Activated B cell treated with CpG ODN at 0.5 μM for 24 hours (primary cell): ENCODE measurements at regions of chr3 and their contacts with region 1.

Region 1: GRCh38 chr3:157088601-157089454 is 71.1 kb downstream of the CCNL1 start:
- DNase-seq: peak; percentile 92
- ATAC-seq: peak; percentile 92
- H3K4me3 Mint-ChIP-seq: peak overlapping the region; percentile 90
- H3K27ac Mint-ChIP-seq: peak overlapping the region; percentile 90
- H3K4me1 Mint-ChIP-seq: peaks cover 26% of the 10 kb centered on the region
- H3K27me3 Mint-ChIP-seq: peaks cover 1% of the 10 kb centered on the region
- CTCF ChIP-seq: no peak

Region 2: DNA sequence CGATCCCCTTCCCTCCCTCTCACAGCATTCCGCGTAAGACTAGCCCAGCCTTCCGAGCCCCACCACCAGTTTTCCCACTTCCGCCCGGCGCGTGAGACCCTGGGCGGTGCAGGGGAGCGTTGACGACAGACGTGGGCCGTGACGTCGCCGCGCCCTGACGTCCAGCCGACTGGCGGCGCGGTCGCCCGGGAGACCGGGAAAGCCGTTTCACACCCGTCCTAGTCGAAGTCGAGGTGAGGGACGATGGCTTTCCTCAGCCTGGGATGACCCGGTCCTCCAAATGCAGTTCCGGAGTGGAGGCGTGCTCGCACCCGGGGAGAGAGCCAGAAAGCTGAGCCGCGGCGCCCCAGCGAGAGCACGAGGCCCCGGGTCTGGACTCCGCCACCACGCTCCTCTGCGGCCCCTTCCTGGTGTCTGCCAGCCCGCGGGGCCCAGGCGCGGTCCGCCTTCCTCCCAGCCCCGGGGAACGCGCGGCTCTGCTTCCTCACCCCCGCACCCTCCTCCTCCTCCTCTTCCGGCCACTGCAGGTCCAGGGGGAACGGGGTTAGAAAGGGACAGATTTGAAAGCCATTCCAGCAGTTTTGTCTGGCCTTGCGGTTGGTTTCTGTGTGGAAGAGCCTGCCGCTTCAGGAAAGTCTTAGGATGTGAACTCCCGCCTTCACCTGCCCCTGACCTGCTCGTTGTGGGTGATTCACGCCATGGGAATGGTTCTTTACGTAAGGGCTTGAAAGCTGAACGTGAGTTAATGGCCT is 262.5 kb before region 1 on chr3 and contains the start of gene LEKR1:
- CTCF ChIA-PET with region 1: interaction called, 3 read pairs
- POLR2A ChIA-PET with region 1: interaction called, 8 read pairs
- intact Hi-C with region 1: loop called (anchors 1 kb)
- DNase-seq: peak; percentile 74
- ATAC-seq: peak; percentile 73
- H3K4me3 Mint-ChIP-seq: peak within 1 kb of the TSS; percentile 90
- H3K27ac Mint-ChIP-seq: peak within 1 kb of the TSS; percentile 96
- H3K4me1 Mint-ChIP-seq: peaks cover 21% of the 10 kb centered on the region
- H3K27me3 Mint-ChIP-seq: no peaks in the 10 kb centered on the region
- CTCF ChIP-seq: no peak
- total RNA-seq, gene LEKR1: 2.8 and 2.9 TPM in 2 replicates

Region 3: DNA sequence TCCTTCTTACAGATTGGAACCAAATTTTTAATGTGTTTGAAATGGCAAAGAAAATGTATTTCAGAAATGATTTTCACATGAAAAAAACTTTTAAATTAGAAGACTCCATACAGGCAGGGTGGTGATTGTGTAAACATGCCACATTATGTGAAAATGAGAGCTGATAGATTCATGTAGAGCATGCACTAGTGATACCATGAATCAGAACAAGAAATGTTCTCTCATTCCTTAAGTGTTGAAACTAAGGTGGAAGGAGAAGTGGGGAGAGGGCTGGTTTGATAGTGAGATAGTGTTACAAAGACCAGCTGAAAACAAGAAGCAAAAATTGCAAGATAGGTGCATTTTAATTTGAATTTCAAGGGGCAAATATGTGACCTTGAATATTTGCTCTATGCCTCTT is 29.2 kb before region 1 on chr3:
- CTCF ChIA-PET with region 1: no interaction called
- POLR2A ChIA-PET with region 1: no interaction called
- intact Hi-C with region 1: no loop called
- DNase-seq: no peak
- ATAC-seq: no peak
- H3K4me3 Mint-ChIP-seq: no peak overlapping the region
- H3K27ac Mint-ChIP-seq: no peak overlapping the region
- H3K4me1 Mint-ChIP-seq: peaks cover 10% of the 10 kb centered on the region
- H3K27me3 Mint-ChIP-seq: no peaks in the 10 kb centered on the region
- CTCF ChIP-seq: no peak

Region 4: GRCh38 chr3:157104928-157105652 is 16.3 kb after region 1 on chr3:
- CTCF ChIA-PET with region 1: no interaction called
- POLR2A ChIA-PET with region 1: interaction called, 20 read pairs
- intact Hi-C with region 1: loop called (anchors 1 kb)
- DNase-seq: no peak
- ATAC-seq: peak; percentile 65
- H3K4me3 Mint-ChIP-seq: no peak overlapping the region
- H3K27ac Mint-ChIP-seq: peak overlapping the region; percentile 60
- H3K4me1 Mint-ChIP-seq: peaks cover 32% of the 10 kb centered on the region
- H3K27me3 Mint-ChIP-seq: no peaks in the 10 kb centered on the region
- CTCF ChIP-seq: no peak

Region 5: DNA sequence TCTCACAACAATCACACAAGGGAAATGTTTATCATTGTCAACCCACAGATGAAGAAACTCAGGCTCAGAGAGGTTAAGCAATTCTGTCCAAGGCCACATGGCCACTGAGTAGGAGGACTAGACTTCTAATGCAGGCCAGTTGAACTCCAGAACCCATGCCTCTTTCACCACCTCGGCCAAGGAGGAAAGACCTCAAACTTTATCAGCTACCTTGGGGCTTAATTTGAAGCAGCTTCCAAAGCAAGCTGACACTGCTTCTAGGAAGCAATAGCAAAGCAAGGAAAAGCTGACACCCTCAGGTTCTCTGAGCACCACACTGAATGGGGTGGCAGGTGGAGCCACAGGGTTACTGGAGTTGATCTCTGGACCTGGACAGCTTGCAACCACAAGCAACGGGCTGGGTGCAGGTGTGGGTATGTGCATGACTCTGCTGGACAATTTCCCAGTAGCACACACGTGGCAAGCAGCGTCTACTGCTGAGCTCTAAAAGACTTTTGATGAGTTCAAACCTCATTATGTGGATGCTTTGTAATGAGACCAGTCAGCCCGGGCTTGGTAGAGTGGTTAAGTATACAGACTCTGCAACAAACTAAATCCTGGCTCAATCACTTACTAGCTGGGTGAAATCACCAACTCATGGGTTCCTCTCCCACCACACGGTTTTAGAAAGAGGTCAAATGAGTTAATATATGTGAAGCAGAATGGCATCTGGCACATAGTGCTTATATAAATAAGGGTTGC is 48.0 kb after region 1 on chr3:
- CTCF ChIA-PET with region 1: interaction called, 29 read pairs
- POLR2A ChIA-PET with region 1: interaction called, 14 read pairs
- intact Hi-C with region 1: loop called (anchors 1 kb)
- DNase-seq: no peak
- ATAC-seq: no peak
- H3K4me3 Mint-ChIP-seq: no peak overlapping the region
- H3K27ac Mint-ChIP-seq: no peak overlapping the region
- H3K4me1 Mint-ChIP-seq: peaks cover 5% of the 10 kb centered on the region
- H3K27me3 Mint-ChIP-seq: no peaks in the 10 kb centered on the region
- CTCF ChIP-seq: no peak